Pancreas (tissue), 10 donors: ENCODE measurements at regions of chr1 and their contacts with region 1.

Region 1: GRCh38 chr1:108125312-108126138 is 74.6 kb downstream of the SLC25A24 start:
- DNase-seq: peak in 3 of 6 donors; percentile 39 to 58 (median 49)
- ATAC-seq: peak; percentile 80 to 99 (median 97)
- H3K4me3 ChIP-seq: no peak overlapping the region
- H3K27ac ChIP-seq: no peak overlapping the region
- H3K4me1 ChIP-seq: no peaks in the 10 kb centered on the region
- H3K27me3 ChIP-seq: peaks cover 0 to 5% (median 0%) of the 10 kb centered on the region in 4 donors
- CTCF ChIP-seq: peak; percentile 88 to 91 (median 89)

Region 2: DNA sequence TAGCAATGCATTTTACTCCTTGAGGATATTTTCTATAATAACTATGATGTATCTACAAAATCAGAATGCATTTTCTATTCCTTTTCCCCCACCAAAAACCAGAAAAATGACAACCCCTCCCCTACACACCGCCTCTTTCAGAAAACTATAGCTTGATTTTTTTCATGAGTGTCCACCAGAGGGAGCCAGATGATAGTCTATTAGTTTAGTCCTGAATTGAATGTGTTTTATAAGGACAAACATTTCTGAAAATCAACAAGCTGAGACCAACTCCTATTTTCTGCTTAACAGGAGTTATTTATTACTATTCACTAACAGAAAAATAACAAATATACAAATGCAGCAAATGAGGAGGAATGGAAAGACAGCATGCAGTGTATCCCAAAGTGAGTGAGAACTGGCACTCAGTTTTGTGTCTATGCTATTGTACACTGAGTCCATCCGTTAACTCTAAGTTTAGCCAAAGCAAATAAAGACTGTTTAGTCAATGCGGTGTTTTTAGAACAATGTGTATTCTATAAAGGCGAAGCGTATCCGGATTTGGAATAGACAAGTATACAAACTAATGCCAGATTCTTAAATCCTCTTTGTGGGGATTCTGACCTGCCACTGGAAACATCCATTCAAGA is 343.2 kb before region 1 on chr1:
- intact Hi-C with region 1: loop called (anchors 5 to 10 kb)
- DNase-seq: peak in 1 of 6 donors; percentile 21
- ATAC-seq: peak in 3 of 4 donors; percentile 71 to 77 (median 76)
- H3K4me3 ChIP-seq: no peak overlapping the region
- H3K27ac ChIP-seq: no peak overlapping the region
- H3K4me1 ChIP-seq: no peaks in the 10 kb centered on the region
- H3K27me3 ChIP-seq: peaks cover 0 to 5% (median 0%) of the 10 kb centered on the region in 4 donors
- CTCF ChIP-seq: peak; percentile 33 to 72 (median 48)

Region 3: GRCh38 chr1:108345787-108346517 is 220.4 kb after region 1 on chr1:
- intact Hi-C with region 1: no loop called
- DNase-seq: no peak
- ATAC-seq: no peak
- H3K4me3 ChIP-seq: no peak overlapping the region
- H3K27ac ChIP-seq: no peak overlapping the region
- H3K4me1 ChIP-seq: no peaks in the 10 kb centered on the region
- H3K27me3 ChIP-seq: no peaks in the 10 kb centered on the region
- CTCF ChIP-seq: no peak